ENCODE measurements at regions of chr22 and their contacts with region 1.

Region 1: GRCh38 chr22:30754971-30755756 is 60.5 kb downstream of the OSBP2 start:
- DNase-seq: no peak
- ATAC-seq: peak; percentile 78

Region 2: DNA sequence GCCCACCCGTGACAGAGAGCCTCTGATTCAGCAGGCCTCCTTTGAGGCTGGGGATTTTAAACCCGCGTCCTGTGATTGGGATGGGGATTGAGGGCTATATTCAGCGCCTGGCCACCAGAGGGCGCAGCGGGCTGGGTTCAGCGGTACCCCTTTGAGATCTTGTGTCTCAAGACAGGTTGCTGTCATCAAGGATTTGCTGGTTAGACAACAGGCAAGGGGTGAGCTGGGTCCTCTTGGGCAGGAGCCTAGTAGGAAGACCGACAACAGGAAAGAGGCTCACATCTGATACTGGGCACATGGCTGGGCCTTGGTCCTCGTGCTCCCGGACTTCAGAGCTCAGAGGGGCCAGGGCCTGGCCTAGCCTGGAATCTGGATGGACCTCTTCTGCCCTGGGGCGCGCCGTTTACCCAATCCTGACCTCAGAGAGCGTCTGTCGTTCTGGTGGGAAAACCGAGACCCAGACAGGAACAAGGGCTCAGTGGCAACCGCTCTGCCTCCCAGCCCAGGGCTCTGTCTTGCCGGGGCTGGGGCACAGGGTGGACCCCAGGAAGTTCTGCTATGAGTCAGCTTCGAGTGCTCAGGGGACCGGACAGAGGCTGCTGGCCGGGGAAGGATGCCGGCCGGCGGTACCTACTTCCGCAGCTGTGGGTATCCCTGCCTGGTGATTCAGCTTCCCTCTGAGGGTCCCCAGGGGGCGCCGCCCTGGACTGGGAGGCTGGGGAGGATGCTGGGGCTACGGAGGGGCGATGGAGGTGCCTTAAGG is 120.5 kb before region 1 on chr22:
- intact Hi-C with region 1: loop called (anchors 5 kb)
- DNase-seq: peak; percentile 95
- ATAC-seq: peak; percentile 90